ENCODE measurements at regions of chr11 and their contacts with region 1.

Region 1: DNA sequence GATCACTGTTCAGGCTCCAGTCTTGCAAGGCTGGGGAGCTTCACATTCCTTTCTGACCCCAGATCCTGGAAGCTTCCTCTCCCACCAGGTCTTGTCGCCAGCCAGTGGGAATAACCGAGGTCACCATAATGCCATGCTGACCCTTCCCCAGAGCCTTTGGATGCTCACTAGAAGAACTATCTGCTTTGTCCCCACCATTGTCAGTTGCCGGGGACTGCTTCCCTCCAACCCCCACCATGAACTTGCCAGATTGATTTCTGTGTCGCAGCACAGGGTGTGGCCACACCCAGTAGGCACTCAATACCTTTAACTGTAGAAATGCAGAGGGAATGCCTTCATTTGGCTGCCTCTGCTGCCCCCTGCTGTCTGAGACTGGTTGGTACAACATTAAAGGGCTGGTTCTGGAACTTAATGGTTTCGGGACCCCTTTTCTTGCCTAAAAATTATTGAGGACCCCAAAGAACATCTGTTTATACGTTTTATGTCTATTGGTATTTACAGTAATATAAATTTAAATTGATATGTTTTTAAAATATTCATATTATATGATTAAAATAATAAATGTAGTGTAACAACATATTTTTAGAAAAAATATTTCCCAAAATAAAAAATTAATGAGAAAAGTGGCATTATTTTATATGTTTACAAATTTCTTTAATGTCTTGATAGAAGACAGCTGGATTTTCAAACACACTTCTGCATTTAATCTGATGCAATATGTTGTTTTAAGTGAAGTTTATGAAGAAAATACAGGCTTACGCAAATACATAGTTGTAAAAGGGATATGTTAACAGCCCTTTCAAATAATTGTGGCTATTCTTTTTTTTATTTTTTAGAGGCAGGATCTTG is 6.7 kb upstream of the GDPD5 start:
- DNase-seq: peak; percentile 31 to 91 (median 76)

Region 2: GRCh38 chr11:75270896-75271418 is 261.5 kb before region 1 on chr11:
- intact Hi-C with region 1: loop called (anchors 10 kb)
- DNase-seq: peak in 8 of 42 donors; percentile 2 to 18 (median 10)

Region 3: GRCh38 chr11:75286826-75287465 is 245.5 kb before region 1 on chr11:
- intact Hi-C with region 1: no loop called
- DNase-seq: peak in 5 of 42 donors; percentile 39 to 75 (median 54)

Region 4: GRCh38 chr11:75388386-75389275 is 143.8 kb before region 1 on chr11:
- intact Hi-C with region 1: loop called (anchors 2 kb)
- DNase-seq: peak in 41 of 42 donors; percentile 12 to 88 (median 71)

Region 5: GRCh38 chr11:75445315-75445953 is 87.0 kb before region 1 on chr11:
- intact Hi-C with region 1: loop called (anchors 2 kb)
- DNase-seq: peak; percentile 37 to 93 (median 83)

Region 6: DNA sequence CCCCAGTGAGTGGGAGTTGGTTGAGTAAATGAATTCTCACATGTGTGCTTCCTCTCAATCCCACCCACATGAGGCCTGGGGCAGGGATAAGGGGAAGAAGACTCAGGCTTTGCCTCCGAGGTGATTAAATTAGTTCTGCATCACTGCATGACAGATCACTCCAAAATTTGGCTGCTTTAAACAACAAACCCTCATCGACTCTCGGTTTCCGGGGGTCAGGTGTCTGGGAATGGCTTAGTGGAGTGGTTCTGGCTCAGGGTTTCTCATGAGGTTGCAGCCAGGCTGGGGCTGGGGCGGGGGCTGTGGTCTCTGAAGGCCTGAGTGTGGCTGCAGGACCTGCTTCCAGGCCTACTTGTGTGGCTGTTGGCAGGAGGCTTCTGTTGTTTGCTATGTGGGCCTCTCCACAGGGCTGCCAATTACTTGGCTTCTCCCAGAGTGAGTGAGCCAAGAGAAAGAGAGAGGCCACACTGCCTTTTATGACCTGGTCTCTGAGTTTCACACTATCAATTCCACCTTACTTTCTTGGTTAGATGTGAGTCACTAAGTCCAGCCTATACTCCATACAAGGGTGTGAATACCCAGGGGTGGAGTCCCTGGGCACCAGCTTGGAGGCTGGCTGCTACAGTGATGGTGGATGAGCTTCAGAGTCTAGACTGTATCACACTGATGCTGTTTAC is 201.1 kb after region 1 on chr11:
- intact Hi-C with region 1: no loop called
- DNase-seq: peak in 11 of 42 donors; percentile 6 to 42 (median 24)

Measured in head of caudate nucleus (tissue), 42 donors.